Caco-2 (cell line): ENCODE measurements at regions of chr14 and their contacts with region 1.

Region 1: GRCh38 chr14:49173765-49174373 is 412.3 kb downstream of the RPS29 start:
- DNase-seq: peak; percentile 72 to 82
- H3K4me3 ChIP-seq: no peak overlapping the region
- H3K4me3 Mint-ChIP-seq: no peak overlapping the region
- H3K27ac Mint-ChIP-seq: no peak overlapping the region
- H3K4me1 ChIP-seq: no peaks in the 10 kb centered on the region
- H3K4me1 Mint-ChIP-seq: no peaks in the 10 kb centered on the region
- H3K27me3 ChIP-seq: no peaks in the 10 kb centered on the region
- H3K27me3 Mint-ChIP-seq: peaks cover 6% of the 10 kb centered on the region
- CTCF ChIP-seq: peak; percentile 68 to 83

Region 2: GRCh38 chr14:48536313-48536712 is 637.6 kb before region 1 on chr14:
- CTCF ChIA-PET with region 1: no interaction called
- POLR2A ChIA-PET with region 1: no interaction called
- intact Hi-C with region 1: loop called (anchors 5 kb)
- DNase-seq: peak; percentile 26 to 37
- H3K4me3 ChIP-seq: no peak overlapping the region
- H3K4me3 Mint-ChIP-seq: no peak overlapping the region
- H3K27ac Mint-ChIP-seq: no peak overlapping the region
- H3K4me1 ChIP-seq: no peaks in the 10 kb centered on the region
- H3K4me1 Mint-ChIP-seq: no peaks in the 10 kb centered on the region
- H3K27me3 ChIP-seq: no peaks in the 10 kb centered on the region
- H3K27me3 Mint-ChIP-seq: peaks cover 3% of the 10 kb centered on the region
- CTCF ChIP-seq: peak in 1 of 2 experiments; percentile 16

Region 3: GRCh38 chr14:48710133-48710532 is 463.7 kb before region 1 on chr14:
- CTCF ChIA-PET with region 1: no interaction called
- POLR2A ChIA-PET with region 1: no interaction called
- intact Hi-C with region 1: loop called (anchors 10 kb)
- DNase-seq: no peak
- H3K4me3 ChIP-seq: no peak overlapping the region
- H3K4me3 Mint-ChIP-seq: no peak overlapping the region
- H3K27ac Mint-ChIP-seq: no peak overlapping the region
- H3K4me1 ChIP-seq: no peaks in the 10 kb centered on the region
- H3K4me1 Mint-ChIP-seq: no peaks in the 10 kb centered on the region
- H3K27me3 ChIP-seq: no peaks in the 10 kb centered on the region
- H3K27me3 Mint-ChIP-seq: no peaks in the 10 kb centered on the region
- CTCF ChIP-seq: no peak

Region 4: DNA sequence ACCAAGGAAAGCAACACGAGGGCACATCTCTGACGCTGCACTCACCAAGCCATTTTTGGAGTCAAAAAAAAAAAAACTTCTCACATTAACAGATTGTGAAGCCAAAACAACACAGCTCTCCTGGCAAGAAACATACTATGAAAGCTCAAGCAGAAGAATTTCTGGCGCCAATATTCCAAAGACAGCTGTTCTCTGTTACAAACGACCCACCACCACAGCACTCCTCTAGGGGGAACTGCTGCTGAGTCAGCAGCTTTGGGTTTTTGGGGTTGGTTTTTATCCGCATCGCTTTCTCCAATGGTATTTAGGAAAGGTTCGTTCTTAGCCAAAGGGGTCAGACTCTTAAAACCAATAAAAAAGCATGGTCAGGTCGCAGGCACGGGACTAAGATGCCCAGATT is 33.0 kb after region 1 on chr14:
- CTCF ChIA-PET with region 1: no interaction called
- POLR2A ChIA-PET with region 1: no interaction called
- intact Hi-C with region 1: no loop called
- DNase-seq: no peak
- H3K4me3 ChIP-seq: no peak overlapping the region
- H3K4me3 Mint-ChIP-seq: no peak overlapping the region
- H3K27ac Mint-ChIP-seq: no peak overlapping the region
- H3K4me1 ChIP-seq: peaks cover 11% of the 10 kb centered on the region
- H3K4me1 Mint-ChIP-seq: no peaks in the 10 kb centered on the region
- H3K27me3 ChIP-seq: no peaks in the 10 kb centered on the region
- H3K27me3 Mint-ChIP-seq: peaks cover 10% of the 10 kb centered on the region
- CTCF ChIP-seq: no peak

Region 5: DNA sequence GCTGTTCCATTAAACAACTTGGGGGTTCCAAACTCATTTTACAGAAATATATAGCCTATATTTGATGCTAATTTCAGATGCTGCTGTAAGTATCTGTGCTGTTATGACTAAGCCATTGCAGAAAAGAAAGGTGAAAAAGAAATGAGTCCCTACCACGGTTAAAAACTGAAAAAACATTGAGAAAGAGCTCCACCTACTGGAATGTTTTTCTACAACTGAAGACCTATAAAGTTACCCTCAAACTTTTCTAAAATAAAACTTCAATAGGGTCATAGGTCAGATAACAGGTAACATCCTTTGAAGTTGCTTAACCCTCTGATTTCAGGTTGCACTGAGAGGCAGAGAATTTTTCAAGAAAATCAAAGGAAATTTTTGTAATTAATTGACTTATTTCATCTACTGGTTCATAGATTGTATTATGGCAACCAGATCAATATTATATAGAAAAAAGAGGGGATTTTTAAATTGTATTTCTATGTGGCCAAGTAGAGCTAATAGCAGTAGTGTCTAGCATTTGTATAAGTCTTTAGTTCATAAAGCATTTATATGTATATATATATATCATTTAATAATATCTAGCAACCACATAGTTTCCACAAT is 132.4 kb after region 1 on chr14:
- CTCF ChIA-PET with region 1: no interaction called
- POLR2A ChIA-PET with region 1: no interaction called
- intact Hi-C with region 1: loop called (anchors 1 kb)
- DNase-seq: peak in 1 of 2 experiments; percentile 16
- H3K4me3 ChIP-seq: no peak overlapping the region
- H3K4me3 Mint-ChIP-seq: no peak overlapping the region
- H3K27ac Mint-ChIP-seq: no peak overlapping the region
- H3K4me1 ChIP-seq: no peaks in the 10 kb centered on the region
- H3K4me1 Mint-ChIP-seq: no peaks in the 10 kb centered on the region
- H3K27me3 ChIP-seq: no peaks in the 10 kb centered on the region; the same call in 1 of the 2 replicates
- H3K27me3 Mint-ChIP-seq: peaks cover 7% of the 10 kb centered on the region
- CTCF ChIP-seq: peak; percentile 38

Region 6: GRCh38 chr14:49405291-49405690 is 231.4 kb after region 1 on chr14:
- CTCF ChIA-PET with region 1: no interaction called
- POLR2A ChIA-PET with region 1: no interaction called
- intact Hi-C with region 1: no loop called
- DNase-seq: no peak
- H3K4me3 ChIP-seq: no peak overlapping the region
- H3K4me3 Mint-ChIP-seq: no peak overlapping the region
- H3K27ac Mint-ChIP-seq: no peak overlapping the region
- H3K4me1 ChIP-seq: no peaks in the 10 kb centered on the region
- H3K4me1 Mint-ChIP-seq: no peaks in the 10 kb centered on the region
- H3K27me3 ChIP-seq: no peaks in the 10 kb centered on the region
- H3K27me3 Mint-ChIP-seq: peaks cover 5% of the 10 kb centered on the region
- CTCF ChIP-seq: no peak

Region 7: DNA sequence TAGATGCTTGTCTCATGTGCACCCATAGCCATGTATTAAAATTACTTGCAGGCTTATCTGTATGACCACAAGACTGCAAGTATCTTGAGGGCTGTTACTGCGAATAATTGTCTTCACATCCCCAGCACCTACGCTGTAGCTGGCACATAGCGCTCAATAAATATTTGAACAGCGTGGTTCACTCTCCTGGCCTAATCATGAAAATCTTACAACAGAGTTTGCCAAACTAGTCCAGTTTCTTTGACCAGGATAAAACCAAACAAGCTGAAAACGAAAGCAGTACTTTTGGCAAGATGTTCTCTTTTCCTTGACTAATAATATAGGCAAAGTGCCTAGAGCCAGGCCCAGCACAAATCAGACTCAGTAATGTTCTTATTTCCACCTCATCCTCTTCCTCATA is 305.6 kb after region 1 on chr14:
- CTCF ChIA-PET with region 1: no interaction called
- POLR2A ChIA-PET with region 1: no interaction called
- intact Hi-C with region 1: no loop called
- DNase-seq: peak; percentile 41 to 55
- H3K4me3 ChIP-seq: no peak overlapping the region
- H3K4me3 Mint-ChIP-seq: peak overlapping the region; percentile 33
- H3K27ac Mint-ChIP-seq: peak overlapping the region; percentile 55
- H3K4me1 ChIP-seq: peaks cover 31% of the 10 kb centered on the region
- H3K4me1 Mint-ChIP-seq: peaks cover 30% of the 10 kb centered on the region
- H3K27me3 ChIP-seq: no peaks in the 10 kb centered on the region
- H3K27me3 Mint-ChIP-seq: no peaks in the 10 kb centered on the region
- CTCF ChIP-seq: no peak